Heart right ventricle (tissue), 16 donors: ENCODE measurements at regions of chr4 and their contacts with region 1.

Region 1: GRCh38 chr4:186015212-186015785 is 53.7 kb upstream of the TLR3 start:
- DNase-seq: peak in 1 of 2 donors; percentile 41
- ATAC-seq: peak; percentile 32 to 85 (median 70)
- H3K4me3 ChIP-seq: peak overlapping the region in 4 of 10 donors; percentile 7 to 13 (median 12)
- H3K27ac ChIP-seq: peak overlapping the region in 9 of 10 donors; percentile 28 to 82 (median 69)
- H3K4me1 ChIP-seq: peaks cover 0 to 13% (median 5%) of the 10 kb centered on the region in 9 donors
- H3K27me3 ChIP-seq: no peaks in the 10 kb centered on the region
- CTCF ChIP-seq: peak in 3 of 9 donors; percentile 35 to 46 (median 41)

Region 2: DNA sequence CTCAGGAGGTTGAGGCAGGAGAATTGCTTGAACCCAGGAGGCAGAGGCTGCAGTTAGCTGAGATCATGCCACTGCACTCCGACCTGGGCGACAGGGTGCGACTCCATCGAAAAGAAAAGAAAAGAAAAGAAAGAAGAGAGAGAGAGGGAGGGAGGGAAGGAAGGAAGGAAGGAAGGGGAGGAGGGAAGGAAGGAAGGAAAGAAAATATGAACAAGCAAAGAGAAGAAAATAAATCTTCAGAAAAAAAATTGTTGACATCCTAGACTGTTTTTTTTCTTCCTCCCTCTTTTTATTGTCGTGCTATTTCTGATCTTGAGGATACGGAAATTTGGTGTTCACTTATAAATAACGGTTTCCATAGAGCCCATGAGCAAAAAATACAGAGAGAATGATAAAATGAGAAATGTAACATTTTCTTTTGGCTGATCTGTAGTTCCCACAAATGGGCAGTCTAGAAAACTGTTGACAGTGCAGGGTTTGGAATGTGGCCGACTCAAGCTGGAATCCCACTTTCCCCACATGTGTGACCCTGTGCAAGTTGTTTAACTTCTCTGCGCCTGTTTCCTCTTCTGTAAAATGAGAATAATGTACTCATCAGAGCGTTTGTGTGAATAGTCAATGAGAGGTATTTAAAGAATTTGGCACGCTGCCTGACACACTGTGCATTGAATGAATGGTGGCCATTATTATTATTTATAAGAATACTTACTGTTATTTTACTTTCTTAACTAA is 222.7 kb before region 1 on chr4:
- intact Hi-C with region 1: loop called in 1 of 10 experiments (anchors 10 kb)
- DNase-seq: peak in 1 of 2 donors; percentile 29
- ATAC-seq: peak in 3 of 8 donors; percentile 12 to 23 (median 20)
- H3K4me3 ChIP-seq: no peak overlapping the region
- H3K27ac ChIP-seq: peak overlapping the region in 8 of 10 donors; percentile 8 to 62 (median 24)
- H3K4me1 ChIP-seq: peaks cover 9 to 91% (median 60%) of the 10 kb centered on the region in 9 donors
- H3K27me3 ChIP-seq: no peaks in the 10 kb centered on the region
- CTCF ChIP-seq: no peak

Region 3: DNA sequence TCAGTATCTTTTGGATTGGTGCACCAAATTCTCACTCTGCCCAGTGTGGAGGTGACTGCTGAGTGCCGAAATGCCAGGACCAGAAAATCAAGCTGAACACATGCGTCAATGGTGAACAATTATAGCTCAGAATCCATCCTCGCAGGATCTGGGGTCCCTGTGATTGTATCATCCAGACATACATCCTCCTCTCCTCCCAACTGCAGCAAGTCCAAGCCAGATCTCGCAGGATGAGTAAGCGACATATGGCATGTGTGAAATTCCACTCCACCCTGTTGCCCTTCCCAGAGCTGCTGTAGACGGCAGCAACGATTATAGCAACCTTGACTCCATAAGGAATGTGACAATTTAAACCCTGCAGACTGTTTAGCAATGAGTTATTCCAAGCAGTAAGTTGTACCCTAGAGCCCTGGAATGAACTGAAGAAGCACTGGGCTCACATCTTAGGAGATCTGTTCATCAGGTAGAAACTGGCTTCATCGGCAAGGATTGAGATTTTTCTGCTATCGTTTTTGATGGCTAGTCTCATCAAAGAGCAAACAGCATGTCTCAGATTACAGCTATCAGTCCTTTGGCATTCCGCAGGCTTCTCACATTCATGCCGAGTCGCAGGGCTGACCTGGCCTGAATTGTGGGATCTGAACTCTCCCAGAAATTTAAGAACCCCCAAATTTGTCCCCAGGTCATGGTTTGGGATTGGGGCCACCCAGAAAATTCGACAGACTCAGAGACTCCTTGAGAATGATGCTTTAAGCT is 167.8 kb before region 1 on chr4:
- intact Hi-C with region 1: loop called in 2 of 10 experiments (anchors 5 kb)
- DNase-seq: peak; percentile 65 to 79
- ATAC-seq: peak; percentile 53 to 94 (median 90)
- H3K4me3 ChIP-seq: no peak overlapping the region
- H3K27ac ChIP-seq: peak overlapping the region; percentile 7 to 95 (median 78)
- H3K4me1 ChIP-seq: peaks cover 5 to 36% (median 24%) of the 10 kb centered on the region in 9 donors
- H3K27me3 ChIP-seq: no peaks in the 10 kb centered on the region
- CTCF ChIP-seq: no peak

Region 4: GRCh38 chr4:185896823-185897488 is 118.3 kb before region 1 on chr4:
- intact Hi-C with region 1: loop called in 1 of 10 experiments (anchors 10 kb)
- DNase-seq: no peak
- ATAC-seq: no peak
- H3K4me3 ChIP-seq: no peak overlapping the region
- H3K27ac ChIP-seq: no peak overlapping the region
- H3K4me1 ChIP-seq: no peaks in the 10 kb centered on the region
- H3K27me3 ChIP-seq: no peaks in the 10 kb centered on the region
- CTCF ChIP-seq: no peak

Region 5: DNA sequence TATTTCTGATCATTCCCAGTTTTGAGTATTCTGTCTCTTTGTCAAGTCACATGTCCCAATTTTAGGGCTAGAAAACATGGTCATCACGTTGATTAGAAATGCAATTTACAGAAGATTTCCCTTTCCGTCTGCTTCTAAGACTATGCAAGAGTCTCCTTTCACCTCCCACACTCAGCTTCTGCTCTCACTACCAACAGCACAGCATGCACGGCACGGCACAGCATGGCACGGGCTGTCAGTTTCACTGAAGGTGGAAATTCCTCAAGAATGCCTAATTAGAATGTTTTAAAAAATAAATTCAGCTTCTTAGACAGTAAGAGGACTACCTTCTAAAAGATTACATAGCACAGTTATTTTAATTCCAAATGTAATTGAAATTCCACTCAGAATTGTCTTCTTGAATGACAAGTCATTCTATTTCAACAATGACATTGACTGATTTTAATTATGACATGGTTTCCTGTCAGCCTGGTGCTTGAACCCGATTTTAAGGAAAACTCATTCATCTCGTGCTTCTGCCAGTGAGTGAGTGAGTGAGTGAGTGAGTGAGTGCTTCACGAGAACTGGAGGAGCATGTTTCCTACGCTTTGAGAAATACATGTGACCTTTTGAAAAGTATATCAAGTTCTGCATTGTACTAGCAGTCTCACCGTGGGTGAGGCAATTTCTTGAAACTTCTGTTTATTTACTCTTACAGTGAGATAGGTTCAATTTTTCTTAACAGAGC is 78.5 kb before region 1 on chr4:
- intact Hi-C with region 1: no loop called
- DNase-seq: no peak
- ATAC-seq: no peak
- H3K4me3 ChIP-seq: no peak overlapping the region
- H3K27ac ChIP-seq: no peak overlapping the region
- H3K4me1 ChIP-seq: peaks cover 0 to 15% (median 0%) of the 10 kb centered on the region in 9 donors
- H3K27me3 ChIP-seq: no peaks in the 10 kb centered on the region
- CTCF ChIP-seq: no peak